ENCODE measurements at regions of chr11 and their contacts with region 1.

Region 1: DNA sequence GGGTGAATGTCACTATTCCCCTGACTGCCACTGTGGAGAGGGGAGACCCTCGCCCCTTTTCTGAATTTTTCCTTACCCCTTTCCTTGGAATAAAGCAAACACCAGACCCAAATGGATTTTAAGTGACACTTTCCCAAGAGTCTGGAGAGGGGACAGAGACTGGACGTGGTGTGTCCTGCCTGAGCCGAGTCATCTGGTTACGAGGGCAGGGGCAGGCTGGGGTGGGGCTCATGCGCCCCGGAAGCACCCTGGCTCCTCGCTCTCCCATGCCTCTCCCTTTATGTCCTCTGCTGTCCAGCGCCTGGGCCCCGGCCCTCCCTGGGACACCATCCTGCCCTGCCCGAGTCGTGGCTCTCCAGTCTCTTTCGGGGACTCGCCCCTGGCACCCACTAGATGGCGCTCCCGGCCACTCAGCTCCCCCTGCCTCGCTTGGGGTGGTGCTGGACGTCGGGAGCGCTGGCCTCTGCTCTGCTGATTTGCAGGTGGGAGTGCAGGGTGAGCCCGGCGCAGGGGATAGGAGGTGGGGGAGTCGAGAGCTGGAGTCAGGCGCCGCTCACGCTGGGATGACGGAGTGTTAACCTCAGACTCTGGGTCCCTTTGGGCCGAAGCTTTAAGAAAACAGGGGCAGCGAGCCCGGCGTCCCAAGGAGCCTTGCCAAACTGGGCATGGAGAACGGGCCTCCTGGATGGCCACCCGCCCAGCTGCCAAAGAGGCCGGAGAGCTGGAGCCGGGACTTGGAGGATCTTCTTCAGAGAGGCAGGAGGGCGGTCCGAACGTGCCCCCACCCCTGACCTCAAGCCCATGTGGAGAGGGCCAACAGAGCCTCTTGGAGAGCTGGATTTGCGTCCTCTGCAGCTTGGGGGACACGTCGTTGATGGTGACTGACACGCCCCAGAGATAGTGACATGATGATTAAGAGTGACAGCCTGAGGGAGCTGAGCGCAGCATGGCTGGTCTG is 89.9 kb downstream of the RPS6KA4 start:
- DNase-seq: peak; percentile 50 to 94
- H3K4me3 ChIP-seq: peak overlapping the region; percentile 18 to 60 (median 37); a peak in 7 of 8 replicates
- H3K27ac ChIP-seq: no peak overlapping the region
- H3K4me1 ChIP-seq: peaks cover 5 to 10% (median 7%) of the 10 kb centered on the region in 4 experiments; a peak in 6 of 7 replicates
- H3K27me3 ChIP-seq: peaks cover 0 to 13% (median 9%) of the 10 kb centered on the region in 4 experiments; a peak in 5 of 7 replicates
- CTCF ChIP-seq: peak; percentile 79 to 91 (median 83)
- EP300 ChIP-seq: no peak
- POLR2A ChIP-seq: no peak
- RAD21 ChIP-seq: peak; percentile 70 to 77

Region 2: DNA sequence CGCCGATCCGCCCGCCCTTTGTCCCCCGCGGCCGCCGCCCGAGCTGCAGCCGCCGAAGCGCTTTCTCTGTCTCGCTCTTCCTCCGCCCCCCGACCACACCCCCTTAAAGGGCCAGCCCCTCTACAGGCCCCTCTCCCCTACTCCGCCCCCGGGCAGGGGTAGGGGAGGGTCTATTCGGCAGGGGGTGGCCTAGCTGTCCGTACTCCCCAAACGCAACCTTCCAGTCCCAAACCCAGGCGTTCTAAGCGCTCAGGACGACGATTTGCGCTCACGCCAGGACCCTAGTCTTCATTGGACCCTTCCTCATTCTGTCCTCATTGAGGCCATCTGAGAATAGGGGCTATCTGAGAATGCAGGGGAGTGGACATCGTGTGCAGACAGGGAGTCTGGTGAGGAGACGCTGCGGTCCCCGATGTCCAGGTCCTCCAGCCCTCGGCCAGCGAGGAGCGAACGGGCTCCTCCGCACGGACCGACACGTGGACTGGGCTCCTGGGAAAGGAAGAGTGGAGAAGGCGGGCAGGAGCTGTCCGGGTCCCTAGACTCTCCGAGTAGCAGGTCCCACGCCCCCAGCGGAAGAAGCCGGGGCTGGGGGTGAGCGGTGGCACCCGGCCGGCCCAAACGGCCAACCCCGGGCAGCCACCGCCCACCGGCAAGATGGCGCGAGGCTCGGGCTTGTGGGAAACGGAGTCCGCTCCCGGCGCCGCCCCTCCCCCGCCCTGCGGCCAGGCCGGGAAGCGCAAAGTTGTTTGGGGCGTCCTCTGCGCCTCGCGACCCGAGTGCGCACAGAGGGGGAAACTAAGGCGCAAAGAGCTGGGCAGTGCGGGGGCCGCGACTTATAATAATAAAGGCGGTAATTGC is 201.8 kb before region 1 on chr11 and contains the start of gene PPP1R14B:
- CTCF ChIA-PET with region 1: no interaction called
- POLR2A ChIA-PET with region 1: no interaction called
- DNase-seq: peak in 1 of 2 experiments; percentile 94
- H3K4me3 ChIP-seq: peak within 1 kb of the TSS; percentile 56 to 99 (median 90)
- H3K27ac ChIP-seq: peak within 1 kb of the TSS; percentile 61
- H3K4me1 ChIP-seq: peaks cover 0 to 48% (median 35%) of the 10 kb centered on the region in 4 experiments; a peak in 6 of 7 replicates
- H3K27me3 ChIP-seq: no peaks in the 10 kb centered on the region
- CTCF ChIP-seq: peak in 1 of 3 experiments; percentile 12; a peak in 1 of 4 replicates
- EP300 ChIP-seq: no peak
- POLR2A ChIP-seq: no peak
- RAD21 ChIP-seq: no peak
- total RNA-seq, gene PPP1R14B: 418 and 419 TPM in 2 replicates

Region 3: GRCh38 chr11:64259533-64260067 is 189.3 kb before region 1 on chr11:
- CTCF ChIA-PET with region 1: no interaction called
- POLR2A ChIA-PET with region 1: no interaction called
- DNase-seq: no peak
- H3K4me3 ChIP-seq: no peak overlapping the region
- H3K27ac ChIP-seq: no peak overlapping the region
- H3K4me1 ChIP-seq: no peaks in the 10 kb centered on the region; a peak in 3 of 7 replicates
- H3K27me3 ChIP-seq: no peaks in the 10 kb centered on the region
- CTCF ChIP-seq: no peak
- EP300 ChIP-seq: no peak
- POLR2A ChIP-seq: no peak
- RAD21 ChIP-seq: no peak

Region 4: DNA sequence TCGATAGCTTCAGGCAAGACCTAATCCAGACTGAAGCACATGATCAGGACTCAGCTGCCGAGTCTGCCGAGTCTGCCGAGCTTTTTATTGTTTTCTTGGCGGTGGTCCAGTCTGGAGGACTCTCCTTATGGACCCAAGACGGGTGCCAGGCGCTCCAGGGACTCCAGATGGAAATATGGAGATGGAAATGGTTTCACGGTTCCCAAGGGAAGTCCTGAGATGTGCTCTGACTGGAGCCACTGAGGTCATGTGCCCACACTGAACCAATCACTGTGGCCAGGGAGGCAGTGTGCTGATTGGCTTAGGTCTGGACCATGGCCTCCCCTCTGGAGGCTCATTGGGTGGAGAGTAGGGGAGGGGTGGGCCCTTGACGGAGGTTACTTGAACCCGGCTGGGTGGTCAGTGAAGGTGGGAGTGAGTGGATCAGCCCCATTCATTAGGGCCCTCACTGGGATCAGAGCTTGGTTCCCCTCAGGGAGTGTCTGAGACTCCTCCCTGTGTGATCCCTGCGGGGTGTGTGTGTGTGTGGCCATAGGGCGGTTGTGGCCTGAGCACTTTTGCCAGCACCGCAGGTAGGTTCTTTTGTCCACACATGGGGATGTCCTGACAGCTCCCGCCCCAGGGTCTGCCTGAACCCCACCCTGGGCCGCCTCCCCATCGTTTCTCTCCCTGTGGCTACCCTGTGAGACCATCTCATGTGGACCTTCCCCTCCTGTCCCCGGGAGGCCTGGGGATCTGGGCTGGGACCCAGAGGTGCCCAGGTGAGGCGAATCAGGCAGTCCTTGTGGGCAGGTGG is 75.9 kb before region 1 on chr11:
- CTCF ChIA-PET with region 1: interaction called, 10 read pairs
- POLR2A ChIA-PET with region 1: interaction called, 3 read pairs
- DNase-seq: peak in 1 of 2 experiments; percentile 62
- H3K4me3 ChIP-seq: peak overlapping the region in 1 of 4 experiments; percentile 35; a peak in 2 of 8 replicates
- H3K27ac ChIP-seq: no peak overlapping the region
- H3K4me1 ChIP-seq: peaks cover 0 to 5% (median 2%) of the 10 kb centered on the region in 4 experiments; a peak in 4 of 7 replicates
- H3K27me3 ChIP-seq: no peaks in the 10 kb centered on the region
- CTCF ChIP-seq: no peak
- EP300 ChIP-seq: no peak
- POLR2A ChIP-seq: no peak; a peak in 1 of 3 replicates
- RAD21 ChIP-seq: no peak

Region 5: DNA sequence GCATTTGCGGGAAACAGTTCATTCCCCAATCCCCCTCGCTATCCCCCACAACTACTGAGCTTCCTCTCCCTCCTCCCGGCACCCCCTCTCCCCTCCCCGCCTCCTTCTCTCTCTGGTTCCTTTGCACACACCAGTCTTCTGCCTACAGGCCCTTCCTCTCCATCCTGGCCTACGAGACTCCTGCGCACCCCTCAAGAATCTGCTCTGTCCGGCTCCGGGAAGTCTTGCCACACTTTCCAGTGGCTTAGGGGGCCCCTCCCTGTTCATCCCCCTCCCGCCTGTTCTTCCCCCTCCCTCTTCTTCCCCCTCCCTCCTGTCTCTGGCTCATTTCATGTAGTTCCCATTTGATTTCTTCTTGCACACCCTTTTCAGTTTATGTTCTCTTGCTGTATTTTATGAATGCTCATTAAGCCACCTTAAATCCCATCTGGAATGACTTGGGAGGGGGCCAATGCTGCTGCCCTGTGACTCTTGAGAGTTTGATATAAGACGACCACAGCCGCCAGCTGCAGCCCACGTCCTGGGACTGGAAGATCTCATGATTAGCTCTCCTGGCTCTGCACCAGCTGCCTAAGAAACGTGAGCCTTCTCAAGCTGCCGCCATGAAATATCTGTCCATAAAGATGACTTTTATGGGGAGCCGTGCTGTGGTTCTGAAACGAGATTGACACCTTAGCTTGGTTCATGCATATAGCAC is 39.0 kb before region 1 on chr11:
- CTCF ChIA-PET with region 1: interaction called, 36 read pairs
- POLR2A ChIA-PET with region 1: no interaction called
- DNase-seq: no peak
- H3K4me3 ChIP-seq: no peak overlapping the region
- H3K27ac ChIP-seq: no peak overlapping the region
- H3K4me1 ChIP-seq: peaks cover 0 to 7% (median 3%) of the 10 kb centered on the region in 4 experiments; a peak in 6 of 7 replicates
- H3K27me3 ChIP-seq: peaks cover 0 to 5% (median 2%) of the 10 kb centered on the region in 4 experiments; a peak in 4 of 7 replicates
- CTCF ChIP-seq: no peak
- EP300 ChIP-seq: no peak
- POLR2A ChIP-seq: no peak
- RAD21 ChIP-seq: no peak

Region 6: DNA sequence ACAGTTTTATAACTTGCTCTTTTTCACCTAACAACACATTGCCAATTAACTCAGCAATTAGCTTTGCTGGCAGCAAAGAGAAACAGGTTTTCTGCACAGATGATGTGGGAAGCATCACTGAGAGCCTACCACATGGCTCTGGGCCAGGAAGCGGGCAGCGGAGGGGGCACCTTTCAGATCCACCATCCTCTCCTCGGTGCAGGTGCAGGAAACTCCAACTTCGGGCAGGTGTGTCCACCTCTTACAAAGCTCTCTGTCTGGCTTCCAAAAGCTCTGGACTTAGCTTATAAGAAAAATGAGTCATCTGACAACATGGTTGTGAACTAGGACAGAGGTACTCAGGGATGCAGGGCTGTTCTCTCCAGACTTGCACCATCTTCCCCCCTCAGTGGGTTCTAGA is 12.9 kb before region 1 on chr11:
- CTCF ChIA-PET with region 1: interaction called, 51 read pairs
- POLR2A ChIA-PET with region 1: no interaction called
- DNase-seq: no peak
- H3K4me3 ChIP-seq: no peak overlapping the region
- H3K27ac ChIP-seq: no peak overlapping the region
- H3K4me1 ChIP-seq: peaks cover 0 to 2% (median 0%) of the 10 kb centered on the region in 4 experiments; a peak in 1 of 7 replicates
- H3K27me3 ChIP-seq: peaks cover 0 to 4% (median 2%) of the 10 kb centered on the region in 4 experiments; a peak in 3 of 7 replicates
- CTCF ChIP-seq: no peak
- EP300 ChIP-seq: no peak
- POLR2A ChIP-seq: no peak
- RAD21 ChIP-seq: no peak

Region 7: DNA sequence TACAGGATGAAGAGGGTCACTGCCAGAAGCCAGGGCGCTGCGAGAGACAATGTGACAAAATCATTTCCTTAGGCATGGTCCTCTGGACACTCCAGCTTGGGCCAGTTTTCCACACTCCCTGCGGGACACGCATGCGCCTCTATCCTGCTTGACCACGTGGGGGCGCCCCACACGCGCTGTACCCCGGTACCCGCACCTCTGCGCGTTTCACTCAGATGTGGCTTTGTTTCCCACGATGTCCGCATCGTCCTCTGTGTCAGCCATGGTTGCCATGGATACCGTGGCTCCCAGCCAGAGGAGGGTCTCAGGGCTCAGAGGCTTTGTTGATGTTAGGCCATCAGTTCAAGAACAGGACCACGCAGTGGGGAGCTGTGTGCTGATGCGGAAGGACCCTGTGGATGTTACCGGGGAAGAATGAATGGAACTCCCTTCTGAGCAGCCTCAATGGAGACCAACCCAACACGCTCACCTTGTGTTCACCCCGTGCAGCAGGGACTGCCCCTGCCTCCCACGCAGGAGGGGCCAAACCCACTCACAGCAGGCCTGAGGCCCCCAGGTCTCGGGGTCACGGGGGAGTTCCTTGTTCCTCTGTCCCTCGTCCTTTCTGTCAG is 41.1 kb after region 1 on chr11:
- CTCF ChIA-PET with region 1: interaction called, 19 read pairs
- POLR2A ChIA-PET with region 1: no interaction called
- DNase-seq: peak; percentile 5 to 90
- H3K4me3 ChIP-seq: no peak overlapping the region
- H3K27ac ChIP-seq: no peak overlapping the region
- H3K4me1 ChIP-seq: no peaks in the 10 kb centered on the region; a peak in 2 of 7 replicates
- H3K27me3 ChIP-seq: peaks cover 3 to 21% (median 13%) of the 10 kb centered on the region in 4 experiments
- CTCF ChIP-seq: peak; percentile 82 to 95 (median 93)
- EP300 ChIP-seq: no peak
- POLR2A ChIP-seq: no peak
- RAD21 ChIP-seq: peak; percentile 89 to 91

Region 8: DNA sequence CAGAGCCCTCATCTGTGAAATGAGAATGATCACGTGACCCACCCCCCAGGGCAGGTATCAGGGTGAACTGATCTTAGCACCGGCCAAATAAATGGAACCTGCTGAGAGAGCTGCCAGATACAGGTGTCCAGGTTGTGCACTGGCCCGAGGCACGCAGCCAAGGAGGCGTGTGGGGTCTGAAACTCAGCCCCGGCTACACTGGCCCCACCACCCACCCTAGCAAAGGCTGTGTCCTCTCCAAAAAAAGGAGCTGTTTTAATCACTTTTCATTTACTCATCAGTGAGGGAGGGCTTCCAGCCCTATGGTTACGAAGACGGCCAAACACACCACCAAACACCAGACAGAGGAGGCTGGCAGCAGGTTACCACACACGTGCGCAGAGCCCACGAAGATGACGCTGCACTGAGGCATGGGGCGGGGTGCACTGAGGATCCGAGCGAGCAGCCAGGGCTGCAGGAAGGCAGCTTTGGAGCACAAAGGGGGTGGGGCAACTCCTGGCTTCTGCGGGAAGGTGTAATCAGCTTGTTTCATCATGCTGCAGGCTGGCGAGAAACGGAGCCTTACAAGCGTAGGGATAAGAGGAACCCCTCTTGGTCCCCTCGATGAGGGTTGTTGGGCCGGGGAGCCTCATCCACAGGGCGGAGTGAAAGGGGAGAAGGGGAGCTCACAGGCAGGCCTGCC is 122.7 kb after region 1 on chr11:
- CTCF ChIA-PET with region 1: interaction called, 14 read pairs
- POLR2A ChIA-PET with region 1: interaction called, 3 read pairs
- DNase-seq: no peak
- H3K4me3 ChIP-seq: no peak overlapping the region
- H3K27ac ChIP-seq: no peak overlapping the region
- H3K4me1 ChIP-seq: peaks cover 0 to 18% (median 12%) of the 10 kb centered on the region in 4 experiments; a peak in 6 of 7 replicates
- H3K27me3 ChIP-seq: peaks cover 0 to 3% (median 0%) of the 10 kb centered on the region in 4 experiments; a peak in 3 of 7 replicates
- CTCF ChIP-seq: no peak
- EP300 ChIP-seq: no peak
- POLR2A ChIP-seq: no peak
- RAD21 ChIP-seq: no peak

Measured in H1 (cell line).